Activated naive CD4-positive, alpha-beta T cell treated with anti-CD3 and anti-CD28 coated beads for 36 hours (primary cell): ENCODE measurements at regions of chr11 and their contacts with region 1.

Region 1: GRCh38 chr11:122697636-122698167 is 42.2 kb downstream of the UBASH3B start:
- DNase-seq: peak; percentile 77
- H3K4me3 Mint-ChIP-seq: peak overlapping the region; percentile 50
- H3K27ac Mint-ChIP-seq: peak overlapping the region; percentile 78
- H3K4me1 Mint-ChIP-seq: peaks cover 77% of the 10 kb centered on the region
- H3K27me3 Mint-ChIP-seq: no peaks in the 10 kb centered on the region

Region 2: DNA sequence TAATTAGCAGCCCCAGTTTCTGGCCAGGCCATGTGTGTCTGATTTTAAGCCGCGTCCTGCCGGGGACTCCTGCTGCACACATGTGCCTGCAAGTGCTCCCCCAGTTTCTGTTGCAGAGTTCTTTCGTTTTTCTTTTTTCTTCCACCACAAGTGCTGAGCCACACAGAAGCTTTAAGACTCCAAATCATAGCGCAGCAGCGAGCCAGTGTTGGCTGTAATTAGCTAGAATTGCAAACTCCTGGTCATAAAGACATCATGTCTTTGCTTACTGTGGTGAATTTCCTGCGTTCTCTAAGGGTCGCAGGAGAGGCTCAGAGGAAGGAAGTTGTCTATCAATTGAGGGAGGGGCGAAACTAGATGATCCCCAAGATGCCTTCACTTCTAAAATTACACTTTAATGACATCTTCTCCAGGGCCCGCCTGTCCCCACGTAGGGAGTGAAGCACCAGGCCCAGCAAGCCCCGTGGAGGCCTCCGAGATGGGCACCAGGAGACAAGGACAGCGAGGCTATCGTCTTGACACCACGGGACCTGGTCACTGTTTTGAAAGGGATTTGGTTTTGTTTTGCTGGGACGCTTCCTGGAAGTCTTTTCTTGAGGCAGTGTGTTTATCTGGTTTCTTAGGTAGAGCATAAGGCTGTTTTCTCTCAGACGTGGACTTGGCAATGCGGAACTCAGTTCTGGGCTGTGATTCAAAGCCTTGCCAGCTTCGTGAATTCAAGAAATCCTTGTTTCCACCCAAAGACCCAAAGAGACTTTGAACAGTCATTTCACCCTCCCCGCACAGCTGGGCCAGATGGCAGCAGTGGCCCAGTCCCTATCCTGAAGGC is 29.6 kb after region 1 on chr11:
- CTCF ChIA-PET with region 1: interaction called, 3 read pairs
- intact Hi-C with region 1: loop called (anchors 1 kb)
- DNase-seq: peak; percentile 57
- H3K4me3 Mint-ChIP-seq: peak overlapping the region; percentile 66
- H3K27ac Mint-ChIP-seq: peak overlapping the region; percentile 63
- H3K4me1 Mint-ChIP-seq: peaks cover 62% of the 10 kb centered on the region
- H3K27me3 Mint-ChIP-seq: no peaks in the 10 kb centered on the region